BJ (cell line): ENCODE measurements at regions of chr3 and their contacts with region 1.

Region 1: DNA sequence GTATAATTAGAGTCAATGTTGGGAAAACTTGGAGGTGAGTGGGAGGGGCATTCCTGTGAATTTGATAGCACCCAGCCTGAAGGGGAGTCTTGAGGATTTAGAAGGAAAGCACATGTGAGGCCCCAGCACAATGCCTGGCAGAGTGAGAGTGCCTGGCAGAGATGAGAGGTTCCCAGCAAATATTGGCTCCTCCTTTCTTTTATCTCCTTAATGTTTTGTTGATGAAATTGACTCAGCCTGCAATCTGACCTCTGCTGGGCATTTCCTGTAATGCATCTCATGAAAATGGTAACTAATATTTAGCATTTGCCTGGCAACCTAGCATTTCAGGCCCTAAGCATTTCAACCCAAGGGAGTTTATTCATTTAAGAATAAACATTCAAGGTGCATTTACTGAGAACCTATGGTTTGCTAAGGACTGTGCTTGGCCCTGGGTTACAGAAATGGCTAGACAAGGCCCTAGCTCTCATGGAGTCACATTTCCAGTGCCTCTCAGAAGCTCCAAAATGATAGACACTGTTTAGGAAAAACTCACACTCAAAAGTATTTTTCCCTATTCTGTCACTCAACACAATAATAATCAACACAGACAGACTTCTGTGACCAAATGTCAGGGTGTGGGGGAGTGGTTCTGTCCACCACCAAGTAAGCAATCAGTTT is 19.0 kb downstream of the PDHB start:
- DNase-seq: no peak
- H3K4me3 ChIP-seq: no peak overlapping the region
- H3K27me3 ChIP-seq: no peaks in the 10 kb centered on the region
- CTCF ChIP-seq: peak; percentile 76

Region 2: GRCh38 chr3:58323529-58324390 is 90.9 kb before region 1 on chr3:
- CTCF ChIA-PET with region 1: interaction called, 30 read pairs
- POLR2A ChIA-PET with region 1: no interaction called
- DNase-seq: no peak
- H3K4me3 ChIP-seq: no peak overlapping the region
- H3K27me3 ChIP-seq: no peaks in the 10 kb centered on the region
- CTCF ChIP-seq: no peak

Region 3: GRCh38 chr3:58332575-58333188 is 82.0 kb before region 1 on chr3 and contains the start of gene PXK:
- CTCF ChIA-PET with region 1: interaction called, 20 read pairs
- POLR2A ChIA-PET with region 1: no interaction called
- DNase-seq: no peak
- H3K4me3 ChIP-seq: peak within 1 kb of the TSS; percentile 77
- H3K27me3 ChIP-seq: no peaks in the 10 kb centered on the region
- CTCF ChIP-seq: peak; percentile 3; the same call in 1 of the 2 replicates
- polyA plus RNA-seq, gene PXK: 36.4 and 38.9 TPM in 2 replicates

Region 4: DNA sequence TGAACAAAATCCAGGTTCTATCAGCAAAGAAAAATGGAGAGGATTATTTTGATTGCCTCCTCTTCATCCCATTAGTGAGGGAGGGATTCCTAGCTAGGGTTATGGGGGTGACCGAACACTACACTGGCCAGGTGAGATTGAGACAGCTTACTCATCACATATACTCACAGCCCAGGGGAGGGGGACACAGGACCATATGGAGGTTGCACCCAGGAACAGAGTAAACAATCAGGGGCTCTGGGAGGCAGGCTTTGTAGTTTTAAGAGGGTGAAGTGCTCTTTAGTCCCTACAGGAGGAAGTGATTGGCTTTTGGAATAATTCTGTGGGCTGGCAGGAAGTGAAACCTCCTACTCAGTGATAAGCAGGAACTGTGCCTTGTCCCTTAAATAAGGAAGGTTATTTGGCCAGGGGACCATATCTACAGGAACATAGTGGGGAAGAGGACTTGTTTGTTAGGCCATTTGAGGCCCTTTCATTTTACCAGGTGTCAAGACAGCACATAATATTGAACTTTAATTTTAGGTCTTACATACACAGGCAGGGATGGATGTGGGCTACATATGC is 59.8 kb after region 1 on chr3:
- CTCF ChIA-PET with region 1: no interaction called
- POLR2A ChIA-PET with region 1: no interaction called
- DNase-seq: no peak
- H3K4me3 ChIP-seq: no peak overlapping the region
- H3K27me3 ChIP-seq: peaks cover 4% of the 10 kb centered on the region; the same call in 1 of the 2 replicates
- CTCF ChIP-seq: no peak